Heart left ventricle (tissue), 16 donors: ENCODE measurements at regions of chr19 and their contacts with region 1.

Region 1: GRCh38 chr19:38929929-38930775 is at the start of gene SARS2:
- DNase-seq: peak; percentile 91 to 97 (median 93)
- ATAC-seq: peak; percentile 80 to 90 (median 86)
- H3K4me3 ChIP-seq: peak within 1 kb of the TSS; percentile 51 to 91 (median 72)
- H3K27ac ChIP-seq: peak within 1 kb of the TSS; percentile 57 to 94 (median 90)
- H3K4me1 ChIP-seq: peaks cover 4 to 43% (median 23%) of the 10 kb centered on the region in 12 donors
- H3K27me3 ChIP-seq: no peaks in the 10 kb centered on the region
- CTCF ChIP-seq: peak; percentile 98 to 100 (median 100)
- POLR2A ChIP-seq: no peak
- total RNA-seq, gene SARS2: 9.0 to 29.1 (median 16.7) TPM

Region 2: DNA sequence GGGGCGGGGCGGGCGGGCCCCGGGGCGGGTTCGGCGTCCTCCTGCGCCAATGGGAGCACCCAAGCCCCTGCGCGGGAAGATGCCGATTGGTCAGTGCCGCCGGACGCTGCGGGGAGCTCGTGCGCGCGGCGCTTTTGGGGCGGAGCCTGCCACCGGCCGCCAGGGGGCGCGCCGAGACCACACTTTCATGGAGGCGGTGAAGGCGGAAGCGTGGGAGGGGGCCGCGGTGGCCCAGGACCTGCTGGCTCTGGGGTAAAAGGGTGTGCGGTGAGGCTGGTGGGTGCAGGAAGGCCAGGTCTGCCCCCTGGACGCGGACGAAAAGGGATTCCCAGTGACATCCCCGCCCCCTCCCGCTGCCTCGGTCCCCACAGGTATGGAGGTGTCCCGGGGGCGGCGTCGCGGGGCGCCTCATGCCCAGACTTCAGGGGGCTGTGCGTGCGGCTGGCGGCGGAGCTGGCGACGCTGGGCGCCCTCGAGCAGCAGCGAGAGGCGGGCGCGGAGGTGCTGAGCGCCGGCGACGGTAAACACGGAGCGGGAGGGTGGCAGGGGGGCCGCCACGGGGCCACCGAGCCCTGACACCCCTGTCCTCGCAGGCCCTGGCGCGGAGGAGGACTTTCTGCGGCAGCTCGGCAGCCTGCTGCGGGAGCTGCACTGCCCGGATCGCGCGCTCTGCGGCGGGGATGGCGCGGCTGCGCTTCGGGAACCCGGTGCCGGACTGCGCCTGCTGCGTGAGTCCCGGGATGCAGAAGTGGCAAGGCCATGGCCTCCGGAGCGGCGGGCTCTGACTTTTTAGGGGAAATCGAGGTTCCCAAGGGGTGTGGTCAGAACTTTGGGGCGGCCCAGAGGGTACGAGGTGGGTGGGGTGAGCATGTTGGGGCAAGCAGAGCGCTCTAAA is 526.9 kb before region 1 on chr19 and contains the start of gene FAM98C:
- intact Hi-C with region 1: loop called in 9 of 10 experiments (anchors 2 to 10 kb)
- DNase-seq: peak; percentile 95 to 99 (median 96)
- ATAC-seq: peak; percentile 99 to 100 (median 99)
- H3K4me3 ChIP-seq: peak within 1 kb of the TSS; percentile 70 to 98 (median 90)
- H3K27ac ChIP-seq: peak within 1 kb of the TSS; percentile 52 to 90 (median 79)
- H3K4me1 ChIP-seq: peaks cover 0 to 12% (median 7%) of the 10 kb centered on the region in 12 donors
- H3K27me3 ChIP-seq: peaks cover 5 to 38% (median 20%) of the 10 kb centered on the region in 9 donors
- CTCF ChIP-seq: peak; percentile 94 to 100 (median 99)
- POLR2A ChIP-seq: peak in 1 of 2 donors; percentile 27
- total RNA-seq, gene FAM98C: 9.3 to 15.8 (median 11.9) TPM

Region 3: GRCh38 chr19:38514812-38515633 is 415.1 kb before region 1 on chr19:
- intact Hi-C with region 1: loop called in 1 of 10 experiments (anchors 10 kb)
- DNase-seq: peak; percentile 30 to 81 (median 58)
- ATAC-seq: peak in 3 of 4 donors; percentile 69 to 82 (median 70)
- H3K4me3 ChIP-seq: no peak overlapping the region
- H3K27ac ChIP-seq: no peak overlapping the region
- H3K4me1 ChIP-seq: peaks cover 0 to 7% (median 1%) of the 10 kb centered on the region in 12 donors
- H3K27me3 ChIP-seq: peaks cover 0 to 9% (median 0%) of the 10 kb centered on the region in 9 donors
- CTCF ChIP-seq: peak; percentile 76 to 88 (median 82)
- POLR2A ChIP-seq: no peak

Region 4: GRCh38 chr19:38618590-38619360 is 311.4 kb before region 1 on chr19 and contains the start of gene EIF3K:
- intact Hi-C with region 1: loop called in 3 of 10 experiments (anchors 5 to 10 kb)
- DNase-seq: peak; percentile 98 to 100 (median 99)
- ATAC-seq: peak; percentile 93 to 97 (median 95)
- H3K4me3 ChIP-seq: peak within 1 kb of the TSS; percentile 54 to 98 (median 84)
- H3K27ac ChIP-seq: peak within 1 kb of the TSS; percentile 81 to 96 (median 90)
- H3K4me1 ChIP-seq: peaks cover 2 to 28% (median 20%) of the 10 kb centered on the region in 12 donors
- H3K27me3 ChIP-seq: no peaks in the 10 kb centered on the region
- CTCF ChIP-seq: no peak
- POLR2A ChIP-seq: peak; percentile 51 to 80
- total RNA-seq, gene EIF3K: 447 to 1,239 (median 596) TPM

Region 5: DNA sequence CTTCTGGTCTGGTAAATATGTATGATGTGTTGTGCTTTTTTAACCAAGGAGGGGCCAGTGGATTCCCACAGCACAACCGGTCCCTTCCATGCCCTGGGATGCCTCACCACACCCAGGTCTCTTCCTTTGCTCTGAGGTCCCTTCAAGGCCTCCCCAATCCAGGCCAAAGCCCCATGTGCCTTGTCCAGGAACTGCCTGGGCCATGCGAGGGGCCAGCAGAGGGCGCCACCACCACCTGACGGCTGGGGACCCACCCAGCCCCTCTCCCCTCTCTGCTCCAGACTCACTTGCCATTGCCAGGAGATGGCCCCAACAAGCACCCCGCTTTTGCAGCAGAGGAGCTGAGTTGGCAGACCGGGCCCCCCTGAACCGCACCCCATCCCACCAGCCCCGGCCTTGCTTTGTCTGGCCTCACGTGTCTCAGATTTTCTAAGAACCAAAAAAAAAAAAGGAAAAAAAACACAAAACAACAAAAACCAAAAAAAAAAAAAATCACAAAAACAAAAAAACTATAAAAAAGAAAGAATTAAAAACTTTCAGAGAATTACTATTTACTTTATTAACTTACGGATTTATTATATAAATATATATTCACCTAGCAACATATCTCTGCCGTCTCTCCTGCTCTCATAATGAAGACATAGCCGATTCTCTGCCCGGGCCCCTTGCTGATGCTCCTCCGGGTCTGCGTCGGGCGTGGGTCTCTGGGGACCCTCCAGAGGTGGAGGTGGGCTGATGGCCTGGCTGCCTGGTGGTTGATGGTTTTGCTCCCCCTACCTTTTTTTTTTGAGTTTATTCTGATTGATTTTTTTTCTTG is 200.3 kb before region 1 on chr19:
- intact Hi-C with region 1: loop called in 4 of 10 experiments (anchors 5 to 10 kb)
- DNase-seq: peak; percentile 58 to 87 (median 78)
- ATAC-seq: peak; percentile 33 to 47 (median 38)
- H3K4me3 ChIP-seq: no peak overlapping the region
- H3K27ac ChIP-seq: peak overlapping the region in 10 of 12 donors; percentile 45 to 80 (median 74)
- H3K4me1 ChIP-seq: peaks cover 7 to 67% (median 40%) of the 10 kb centered on the region in 12 donors
- H3K27me3 ChIP-seq: no peaks in the 10 kb centered on the region
- CTCF ChIP-seq: peak; percentile 66 to 90 (median 76)
- POLR2A ChIP-seq: no peak

Region 6: GRCh38 chr19:38849860-38850435 is 80.2 kb before region 1 on chr19 and contains the start of gene HNRNPL:
- intact Hi-C with region 1: loop called in 4 of 10 experiments (anchors 1 to 5 kb)
- DNase-seq: peak; percentile 99 to 100 (median 100)
- ATAC-seq: peak; percentile 79 to 85 (median 81)
- H3K4me3 ChIP-seq: peak within 1 kb of the TSS; percentile 83 to 100 (median 95)
- H3K27ac ChIP-seq: peak within 1 kb of the TSS; percentile 99 to 100 (median 100)
- H3K4me1 ChIP-seq: peaks cover 9 to 59% (median 46%) of the 10 kb centered on the region in 12 donors
- H3K27me3 ChIP-seq: no peaks in the 10 kb centered on the region
- CTCF ChIP-seq: peak; percentile 21 to 81 (median 56)
- POLR2A ChIP-seq: peak; percentile 40 to 90
- total RNA-seq, gene HNRNPL: 93.6 to 256 (median 165) TPM

Region 7: GRCh38 chr19:39031368-39032062 is 101.4 kb after region 1 on chr19:
- intact Hi-C with region 1: no loop called
- DNase-seq: peak; percentile 77 to 91 (median 86)
- ATAC-seq: peak; percentile 95 to 96 (median 96)
- H3K4me3 ChIP-seq: peak overlapping the region; percentile 49 to 92 (median 68)
- H3K27ac ChIP-seq: peak overlapping the region in 11 of 12 donors; percentile 27 to 84 (median 70)
- H3K4me1 ChIP-seq: peaks cover 0 to 22% (median 2%) of the 10 kb centered on the region in 12 donors
- H3K27me3 ChIP-seq: peaks cover 0 to 34% (median 0%) of the 10 kb centered on the region in 9 donors
- CTCF ChIP-seq: no peak
- POLR2A ChIP-seq: peak in 1 of 2 donors; percentile 7